ENCODE measurements at regions of chr15 and their contacts with region 1.

Region 1: GRCh38 chr15:87489902-87490665 is 766.5 kb downstream of the NTRK3 start:
- DNase-seq: no peak
- ATAC-seq: no peak
- H3K4me3 ChIP-seq: no peak overlapping the region
- H3K27ac ChIP-seq: no peak overlapping the region
- H3K4me1 ChIP-seq: peaks cover 2 to 16% of the 10 kb centered on the region in 2 donors
- H3K27me3 ChIP-seq: no peaks in the 10 kb centered on the region

Region 2: DNA sequence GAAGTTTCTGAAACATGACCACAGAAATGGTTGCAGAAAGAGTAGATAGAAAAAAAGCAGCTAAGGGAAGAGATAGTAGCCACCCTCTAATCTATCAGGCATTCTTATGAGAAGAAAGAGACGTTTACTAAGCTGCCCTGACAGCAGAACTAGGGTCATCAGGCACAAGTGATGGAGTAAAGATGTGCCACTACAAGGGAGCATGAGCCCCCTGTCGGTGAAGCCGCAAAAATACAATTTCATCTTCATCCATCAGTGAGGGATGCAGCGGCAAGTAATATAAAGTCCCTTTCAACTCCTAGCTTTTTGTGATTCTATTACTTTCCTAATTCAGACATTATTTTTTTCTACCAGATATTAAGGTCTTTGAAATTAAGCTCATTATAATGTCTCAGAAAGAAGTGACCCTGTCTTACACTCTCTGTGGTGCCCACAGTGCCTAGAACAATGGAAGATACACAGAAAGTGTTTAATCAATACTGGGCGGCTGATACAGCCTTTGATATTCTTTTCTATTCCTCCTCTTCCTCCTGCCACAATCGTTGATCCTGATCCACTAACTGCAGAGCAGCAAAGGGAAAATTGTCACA is 114.9 kb after region 1 on chr15:
- intact Hi-C with region 1: loop called (anchors 5 to 10 kb)
- DNase-seq: no peak
- ATAC-seq: no peak
- H3K4me3 ChIP-seq: no peak overlapping the region
- H3K27ac ChIP-seq: no peak overlapping the region
- H3K4me1 ChIP-seq: peaks cover under 1 to 5% of the 10 kb centered on the region in 2 donors
- H3K27me3 ChIP-seq: no peaks in the 10 kb centered on the region

Region 3: DNA sequence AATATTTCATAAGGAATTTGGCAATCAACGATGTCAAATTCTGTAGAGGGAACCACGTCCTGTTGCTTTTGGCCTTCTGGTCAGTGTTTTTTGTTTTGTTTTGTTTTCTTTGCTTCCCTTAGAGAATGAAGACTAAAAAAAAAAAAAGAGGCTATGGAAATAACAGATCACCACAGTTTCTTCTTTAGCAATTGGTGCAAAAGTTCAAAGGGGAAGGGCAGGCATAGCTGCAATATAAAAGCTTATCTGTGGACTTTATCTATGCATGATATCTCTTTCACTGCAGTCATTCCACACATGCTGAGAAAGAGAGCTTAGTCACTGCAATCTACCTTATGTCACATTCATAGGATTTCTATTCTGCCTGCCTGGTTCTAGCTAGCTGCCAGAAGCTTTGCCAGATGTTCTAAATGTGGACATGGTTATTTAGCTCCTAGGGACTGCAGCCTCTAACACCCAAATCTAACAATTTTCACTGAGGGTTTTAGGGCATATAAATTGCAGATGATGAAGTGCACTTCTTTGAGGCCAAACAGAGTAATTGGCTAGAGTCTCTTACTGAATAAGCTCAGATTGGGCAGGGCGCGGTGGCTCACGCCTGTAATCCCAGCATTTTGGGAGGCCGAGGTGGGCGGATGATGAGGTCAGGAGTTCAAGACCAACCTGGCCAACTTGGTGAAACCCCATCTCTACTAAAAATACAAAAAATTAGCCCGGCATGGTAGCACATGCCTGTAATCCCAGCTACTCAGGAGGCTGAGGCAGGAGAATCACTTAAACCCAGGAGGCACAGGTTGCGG is 129.3 kb after region 1 on chr15:
- intact Hi-C with region 1: loop called in 1 of 2 experiments (anchors 10 kb)
- DNase-seq: no peak
- ATAC-seq: peak; percentile 88
- H3K4me3 ChIP-seq: no peak overlapping the region
- H3K27ac ChIP-seq: peak overlapping the region; percentile 51 to 86
- H3K4me1 ChIP-seq: peaks cover 2 to 8% of the 10 kb centered on the region in 2 donors
- H3K27me3 ChIP-seq: no peaks in the 10 kb centered on the region

Region 4: DNA sequence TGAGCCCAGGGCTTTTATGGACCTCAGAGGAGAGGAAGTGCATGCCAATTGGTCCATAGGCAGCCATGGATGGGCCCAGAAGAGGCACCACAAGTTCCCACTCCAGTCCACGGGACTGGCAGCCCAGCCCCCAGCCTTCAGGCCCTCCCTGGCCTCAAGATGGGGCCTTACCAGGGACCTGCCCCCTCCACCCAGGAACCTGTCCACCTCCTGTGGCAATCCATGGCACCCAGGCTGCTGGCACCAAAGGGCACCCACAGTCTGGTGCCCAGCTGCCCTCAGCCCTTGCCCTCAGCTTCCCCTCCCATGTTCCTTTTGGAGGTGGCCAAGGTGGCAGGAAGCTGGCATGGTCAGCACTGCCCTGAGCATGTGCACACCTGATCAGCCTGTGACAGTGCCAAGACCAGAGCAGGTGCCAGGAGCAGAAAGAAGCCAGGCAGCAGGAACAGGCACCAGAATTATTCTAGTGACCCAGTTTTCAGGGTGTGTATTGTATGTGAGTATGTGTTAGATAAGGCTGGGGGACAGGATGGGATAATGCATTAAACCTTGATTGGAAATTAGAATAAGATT is 351.4 kb after region 1 on chr15:
- intact Hi-C with region 1: no loop called
- DNase-seq: no peak
- ATAC-seq: no peak
- H3K4me3 ChIP-seq: no peak overlapping the region
- H3K27ac ChIP-seq: no peak overlapping the region
- H3K4me1 ChIP-seq: no peaks in the 10 kb centered on the region
- H3K27me3 ChIP-seq: no peaks in the 10 kb centered on the region

Measured in aorta (tissue), 5 donors.